Activated CD4-positive, alpha-beta memory T cell treated with anti-CD3 and anti-CD28 coated beads for 36 hours (primary cell): ENCODE measurements at regions of chr5 and their contacts with region 1.

Region 1: DNA sequence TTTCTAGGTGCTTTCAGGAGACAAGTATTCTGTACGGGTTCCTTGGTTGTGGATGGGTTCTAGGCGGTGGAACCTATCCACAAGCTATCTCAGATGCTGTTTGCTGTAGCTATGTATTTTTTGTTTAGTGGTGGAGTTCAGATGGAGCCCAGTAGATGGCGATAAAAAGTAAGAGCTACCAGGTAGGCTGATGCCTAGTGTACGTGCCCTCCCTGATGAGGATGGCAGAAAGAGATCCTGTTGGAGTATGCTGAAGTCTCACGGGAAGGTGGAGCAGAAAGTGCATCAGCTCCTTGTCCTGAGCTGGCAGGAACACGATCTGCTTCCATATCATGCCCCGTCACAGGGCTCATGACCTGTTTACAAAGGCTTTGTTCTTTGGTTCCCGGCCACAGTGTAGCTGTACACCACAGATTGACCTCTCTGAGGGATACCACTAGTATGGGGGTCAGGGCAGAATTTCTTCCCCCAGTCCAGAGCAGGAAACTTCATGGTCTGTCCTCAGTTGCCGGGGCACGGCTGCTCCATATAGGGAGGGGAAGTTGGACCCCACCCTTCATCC is 12.6 kb upstream of the UGT3A2 start:
- DNase-seq: no peak
- H3K4me3 Mint-ChIP-seq: no peak overlapping the region
- H3K27ac Mint-ChIP-seq: no peak overlapping the region
- H3K4me1 Mint-ChIP-seq: peaks cover 3% of the 10 kb centered on the region
- H3K27me3 Mint-ChIP-seq: peaks cover 25% of the 10 kb centered on the region

Region 2: GRCh38 chr5:36096486-36096885 is 17.2 kb after region 1 on chr5:
- CTCF ChIA-PET with region 1: interaction called, 12 read pairs
- POLR2A ChIA-PET with region 1: no interaction called
- intact Hi-C with region 1: no loop called
- DNase-seq: no peak
- H3K4me3 Mint-ChIP-seq: no peak overlapping the region
- H3K27ac Mint-ChIP-seq: no peak overlapping the region
- H3K4me1 Mint-ChIP-seq: no peaks in the 10 kb centered on the region
- H3K27me3 Mint-ChIP-seq: no peaks in the 10 kb centered on the region

Region 3: GRCh38 chr5:36151434-36152323 is 72.4 kb after region 1 on chr5 and contains the starts of genes LMBRD2 and SKP2:
- CTCF ChIA-PET with region 1: interaction called, 9 read pairs
- POLR2A ChIA-PET with region 1: no interaction called
- intact Hi-C with region 1: loop called (anchors 2 kb)
- DNase-seq: peak; percentile 98
- H3K4me3 Mint-ChIP-seq: peak within 1 kb of the TSS; percentile 95
- H3K27ac Mint-ChIP-seq: peak within 1 kb of the TSS; percentile 84
- H3K4me1 Mint-ChIP-seq: peaks cover 62% of the 10 kb centered on the region
- H3K27me3 Mint-ChIP-seq: no peaks in the 10 kb centered on the region
- total RNA-seq, gene LMBRD2: 8.1 to 10.0 TPM
- total RNA-seq, gene SKP2: 33.1 to 34.7 TPM

Region 4: GRCh38 chr5:36305571-36306326 is 226.5 kb after region 1 on chr5:
- CTCF ChIA-PET with region 1: interaction called, 5 read pairs
- POLR2A ChIA-PET with region 1: no interaction called
- intact Hi-C with region 1: loop called (anchors 1 kb)
- DNase-seq: peak; percentile 32
- H3K4me3 Mint-ChIP-seq: no peak overlapping the region
- H3K27ac Mint-ChIP-seq: no peak overlapping the region
- H3K4me1 Mint-ChIP-seq: peaks cover 5% of the 10 kb centered on the region
- H3K27me3 Mint-ChIP-seq: peaks cover 2% of the 10 kb centered on the region

Region 5: GRCh38 chr5:36507332-36507952 is 428.2 kb after region 1 on chr5:
- CTCF ChIA-PET with region 1: interaction called, 25 read pairs
- POLR2A ChIA-PET with region 1: no interaction called
- intact Hi-C with region 1: loop called (anchors 1 kb)
- DNase-seq: peak; percentile 78
- H3K4me3 Mint-ChIP-seq: no peak overlapping the region
- H3K27ac Mint-ChIP-seq: no peak overlapping the region
- H3K4me1 Mint-ChIP-seq: no peaks in the 10 kb centered on the region
- H3K27me3 Mint-ChIP-seq: no peaks in the 10 kb centered on the region

Region 6: DNA sequence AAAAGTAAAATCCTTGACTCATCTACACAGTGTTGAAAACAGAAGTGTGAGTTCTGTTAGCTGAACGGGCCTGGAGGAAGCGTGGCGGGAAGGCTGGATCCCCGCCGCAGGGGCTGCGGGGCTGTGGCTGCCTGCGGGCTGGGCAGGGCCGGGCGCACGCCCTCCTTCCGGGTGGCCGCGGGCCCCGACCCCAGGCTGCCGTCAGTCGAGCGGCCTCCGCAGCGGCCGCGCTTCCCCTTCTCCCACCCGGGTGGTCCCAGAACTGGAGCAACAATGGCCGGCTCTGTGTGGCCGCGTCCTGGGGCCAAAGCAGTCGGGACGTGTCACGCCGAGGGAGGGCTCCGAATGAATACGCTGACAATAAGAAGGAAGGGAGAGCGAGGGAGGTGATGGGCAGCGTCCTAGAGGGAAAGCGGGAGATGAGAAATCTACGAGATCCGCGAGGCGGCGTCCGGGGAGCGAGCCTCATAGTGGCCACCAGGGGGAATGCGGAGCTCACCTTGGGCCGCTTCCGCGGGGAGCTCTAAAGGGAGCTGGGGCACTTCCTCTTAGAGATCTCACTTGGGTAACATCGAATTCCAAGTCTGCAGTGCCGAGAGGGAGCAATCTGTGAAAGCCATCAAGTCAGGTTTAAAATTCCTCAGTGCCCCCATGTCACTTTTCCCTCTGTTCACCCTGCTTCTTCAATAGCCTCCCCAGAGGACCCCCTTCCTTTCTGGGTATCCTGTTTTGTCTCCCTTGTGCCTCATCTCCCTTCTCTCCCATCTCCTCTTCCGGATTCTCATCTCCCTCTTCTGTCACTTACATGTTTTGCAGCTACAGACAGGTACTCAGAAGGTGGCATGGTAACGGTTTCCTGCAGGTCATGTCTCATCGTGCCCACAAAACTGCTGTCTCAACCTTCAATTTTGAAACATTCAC is 611.0 kb after region 1 on chr5:
- CTCF ChIA-PET with region 1: interaction called, 8 read pairs
- POLR2A ChIA-PET with region 1: no interaction called
- intact Hi-C with region 1: loop called (anchors 5 kb)
- DNase-seq: peak; percentile 77
- H3K4me3 Mint-ChIP-seq: peak overlapping the region; percentile 67
- H3K27ac Mint-ChIP-seq: no peak overlapping the region
- H3K4me1 Mint-ChIP-seq: peaks cover 13% of the 10 kb centered on the region
- H3K27me3 Mint-ChIP-seq: peaks cover 20% of the 10 kb centered on the region